ENCODE measurements at regions of chr7 and their contacts with region 1.

Region 1: GRCh38 chr7:41116817-41117216 is 586.1 kb downstream of the INHBA start:
- DNase-seq: peak; percentile 96
- H3K4me3 ChIP-seq: no peak overlapping the region
- H3K27ac ChIP-seq: peak overlapping the region; percentile 100
- H3K4me1 ChIP-seq: peaks cover 48% of the 10 kb centered on the region
- H3K27me3 ChIP-seq: no peaks in the 10 kb centered on the region
- CTCF ChIP-seq: no peak

Region 2: GRCh38 chr7:40833888-40834234 is 283.0 kb before region 1 on chr7:
- CTCF ChIA-PET with region 1: no interaction called
- dilution Hi-C with region 1: no loop called
- in situ Hi-C with region 1: no loop called
- intact Hi-C with region 1: loop called (anchors 5 kb)
- DNase-seq: no peak
- H3K4me3 ChIP-seq: no peak overlapping the region
- H3K27ac ChIP-seq: no peak overlapping the region
- H3K4me1 ChIP-seq: peaks cover 23% of the 10 kb centered on the region
- H3K27me3 ChIP-seq: no peaks in the 10 kb centered on the region
- CTCF ChIP-seq: peak; percentile 26 to 45

Region 3: GRCh38 chr7:41148521-41148951 is 31.7 kb after region 1 on chr7:
- CTCF ChIA-PET with region 1: no interaction called
- dilution Hi-C with region 1: no loop called
- in situ Hi-C with region 1: no loop called
- intact Hi-C with region 1: loop called (anchors 1 kb)
- DNase-seq: peak; percentile 98
- H3K4me3 ChIP-seq: no peak overlapping the region
- H3K27ac ChIP-seq: peak overlapping the region; percentile 99
- H3K4me1 ChIP-seq: peaks cover 46% of the 10 kb centered on the region
- H3K27me3 ChIP-seq: no peaks in the 10 kb centered on the region
- CTCF ChIP-seq: no peak

Region 4: DNA sequence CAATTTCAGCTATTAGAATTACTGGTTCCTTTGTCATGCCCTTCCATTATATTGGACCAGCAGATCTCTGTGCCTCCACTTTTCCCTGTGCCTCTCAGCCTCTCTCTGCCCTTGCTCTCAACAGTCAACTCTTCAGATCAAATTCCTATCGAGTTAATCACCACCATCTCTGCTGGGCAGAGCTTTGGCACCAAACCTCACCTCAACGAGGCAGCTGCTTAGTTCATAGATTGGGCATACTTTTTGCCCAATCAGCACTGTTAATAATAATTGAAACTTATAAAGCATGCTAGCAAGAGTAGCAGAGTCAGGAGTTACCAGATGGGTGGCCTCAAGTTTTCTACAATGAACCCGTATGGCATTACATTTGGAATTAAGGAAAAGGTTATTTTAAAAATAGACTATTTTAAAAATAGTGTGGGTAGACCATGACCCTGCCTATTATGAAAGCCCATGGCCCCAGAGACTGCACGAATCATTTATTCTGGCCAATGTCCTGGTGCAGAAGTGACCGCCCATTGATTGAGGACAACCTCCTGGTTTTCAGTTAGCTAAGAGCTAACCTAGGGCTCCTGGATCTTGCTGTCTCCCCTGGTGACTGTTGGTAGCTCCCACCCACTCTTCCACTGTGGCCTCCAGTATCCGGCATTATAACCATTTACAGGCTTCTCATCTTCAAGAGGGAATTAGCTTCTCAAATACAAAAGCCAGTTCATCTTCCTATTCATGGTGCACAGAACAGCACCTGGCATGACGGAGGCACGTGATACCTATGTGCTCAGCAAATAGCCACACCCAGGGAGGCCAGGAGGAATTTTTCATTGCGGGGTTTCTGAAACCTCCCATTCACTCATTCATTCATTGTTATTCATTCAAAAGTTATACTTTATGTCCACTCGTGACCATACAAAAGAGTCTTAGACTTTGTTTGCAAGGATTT is 320.7 kb after region 1 on chr7:
- CTCF ChIA-PET with region 1: no interaction called
- dilution Hi-C with region 1: no loop called
- in situ Hi-C with region 1: no loop called
- intact Hi-C with region 1: loop called (anchors 5 kb)
- DNase-seq: peak; percentile 62
- H3K4me3 ChIP-seq: no peak overlapping the region
- H3K27ac ChIP-seq: peak overlapping the region; percentile 31
- H3K4me1 ChIP-seq: peaks cover 18% of the 10 kb centered on the region
- H3K27me3 ChIP-seq: no peaks in the 10 kb centered on the region
- CTCF ChIP-seq: no peak

Measured in mammary epithelial cell (primary cell).